ENCODE measurements at regions of chr1 and their contacts with region 1.

Region 1: GRCh38 chr1:70504176-70504820 is 93.2 kb downstream of the CTH start:
- DNase-seq: no peak
- H3K4me3 ChIP-seq: no peak overlapping the region
- H3K27ac ChIP-seq: no peak overlapping the region
- H3K4me1 ChIP-seq: peaks cover 2% of the 10 kb centered on the region
- H3K27me3 ChIP-seq: no peaks in the 10 kb centered on the region
- CTCF ChIP-seq: no peak
- EP300 ChIP-seq: no peak
- POLR2A ChIP-seq: no peak

Region 2: GRCh38 chr1:70142075-70142474 is 362.2 kb before region 1 on chr1:
- intact Hi-C with region 1: loop called in 1 of 4 experiments (anchors 5 kb)
- DNase-seq: no peak
- H3K4me3 ChIP-seq: no peak overlapping the region
- H3K27ac ChIP-seq: no peak overlapping the region
- H3K4me1 ChIP-seq: peaks cover 12% of the 10 kb centered on the region
- H3K27me3 ChIP-seq: no peaks in the 10 kb centered on the region
- CTCF ChIP-seq: peak in 1 of 3 donors; percentile 26
- EP300 ChIP-seq: no peak
- POLR2A ChIP-seq: no peak

Measured in ovary (tissue), 10 donors.